Caco-2 (cell line): ENCODE measurements at regions of chr2 and their contacts with region 1.

Region 1: DNA sequence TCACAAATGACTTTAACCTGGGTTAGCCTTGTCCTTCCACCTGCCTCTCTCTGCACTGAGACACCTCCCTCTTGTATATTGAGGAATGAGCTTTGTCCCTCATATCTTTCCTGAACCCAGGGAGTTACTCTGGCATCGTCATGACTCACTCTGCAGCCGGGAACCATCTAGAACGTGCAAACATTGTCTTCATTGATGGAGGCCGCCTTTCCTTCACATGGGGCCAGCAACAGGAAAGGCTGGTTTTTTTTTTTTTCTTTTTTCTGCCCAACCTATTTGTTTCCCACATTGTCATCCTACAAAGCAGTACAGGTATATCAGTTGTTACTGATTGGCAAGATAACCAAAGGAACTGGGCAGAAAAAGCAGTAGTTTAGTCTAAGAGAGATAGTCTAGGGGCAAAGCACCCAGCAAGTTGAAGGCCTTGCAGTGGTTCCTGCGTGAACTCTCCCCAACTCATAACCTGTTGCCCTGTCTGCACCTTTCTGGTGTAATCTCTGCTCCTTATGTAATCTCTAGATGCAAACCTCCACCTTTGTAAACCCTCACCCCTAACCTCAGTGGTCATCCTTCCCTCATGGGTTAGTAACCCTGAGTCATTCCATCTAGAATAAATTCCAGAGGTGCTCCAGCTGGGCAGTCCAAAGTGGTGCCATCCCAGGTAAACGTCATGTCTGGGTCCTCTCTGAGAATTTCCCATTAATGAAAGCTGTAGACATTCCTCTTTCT is 38.3 kb downstream of the SLC40A1 start:
- DNase-seq: peak; percentile 86 to 92
- H3K4me3 ChIP-seq: no peak overlapping the region
- H3K4me3 Mint-ChIP-seq: peak overlapping the region; percentile 27
- H3K27ac Mint-ChIP-seq: peak overlapping the region; percentile 71
- H3K4me1 ChIP-seq: peaks cover 36% of the 10 kb centered on the region
- H3K4me1 Mint-ChIP-seq: peaks cover 37% of the 10 kb centered on the region
- H3K27me3 ChIP-seq: no peaks in the 10 kb centered on the region
- H3K27me3 Mint-ChIP-seq: no peaks in the 10 kb centered on the region
- CTCF ChIP-seq: no peak

Region 2: DNA sequence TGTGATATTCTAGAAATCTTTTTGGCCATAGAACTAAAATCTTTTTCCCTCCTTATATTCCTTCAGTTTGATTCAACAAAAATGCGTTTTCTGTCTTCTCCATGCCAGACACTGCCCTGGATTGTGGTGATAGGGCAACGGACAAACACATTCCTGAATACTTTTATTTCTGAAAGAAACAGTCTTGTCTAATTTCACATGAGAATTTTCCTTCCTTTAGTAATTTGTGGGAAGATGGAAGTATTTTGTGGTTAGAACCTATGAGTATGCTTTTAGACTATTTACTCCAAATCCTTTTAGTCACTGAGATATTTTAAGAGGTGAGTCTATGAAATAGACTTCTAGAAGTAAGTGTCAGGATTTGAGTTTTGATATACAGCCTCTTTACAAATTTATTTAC is 412.3 kb before region 1 on chr2:
- CTCF ChIA-PET with region 1: no interaction called
- POLR2A ChIA-PET with region 1: no interaction called
- intact Hi-C with region 1: no loop called
- DNase-seq: no peak
- H3K4me3 ChIP-seq: no peak overlapping the region
- H3K4me3 Mint-ChIP-seq: no peak overlapping the region
- H3K27ac Mint-ChIP-seq: no peak overlapping the region
- H3K4me1 ChIP-seq: no peaks in the 10 kb centered on the region
- H3K4me1 Mint-ChIP-seq: no peaks in the 10 kb centered on the region
- H3K27me3 ChIP-seq: no peaks in the 10 kb centered on the region
- H3K27me3 Mint-ChIP-seq: no peaks in the 10 kb centered on the region
- CTCF ChIP-seq: no peak

Region 3: DNA sequence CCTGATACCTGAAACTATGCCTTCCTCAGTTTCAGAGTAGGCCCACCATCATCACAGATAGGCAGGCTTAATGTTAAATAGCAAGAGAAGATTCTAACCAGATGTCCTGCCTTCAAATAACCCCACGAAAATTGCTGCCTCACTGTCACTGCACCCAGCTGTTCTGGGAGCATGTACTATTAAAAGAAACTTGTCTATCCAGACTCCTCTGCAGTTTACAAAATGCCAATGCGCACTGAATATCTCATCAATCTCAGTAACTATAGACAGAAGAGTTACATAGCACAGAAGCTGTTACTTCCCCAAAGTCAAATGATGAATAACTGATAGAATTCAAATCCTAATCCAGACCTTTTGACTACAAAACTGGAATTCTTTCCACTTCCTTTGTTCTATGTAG is 57.2 kb before region 1 on chr2:
- CTCF ChIA-PET with region 1: no interaction called
- POLR2A ChIA-PET with region 1: no interaction called
- intact Hi-C with region 1: no loop called
- DNase-seq: no peak
- H3K4me3 ChIP-seq: no peak overlapping the region
- H3K4me3 Mint-ChIP-seq: no peak overlapping the region
- H3K27ac Mint-ChIP-seq: no peak overlapping the region
- H3K4me1 ChIP-seq: peaks cover 20% of the 10 kb centered on the region
- H3K4me1 Mint-ChIP-seq: peaks cover 8% of the 10 kb centered on the region
- H3K27me3 ChIP-seq: no peaks in the 10 kb centered on the region
- H3K27me3 Mint-ChIP-seq: no peaks in the 10 kb centered on the region
- CTCF ChIP-seq: no peak

Region 4: GRCh38 chr2:189498205-189498604 is 44.1 kb before region 1 on chr2:
- CTCF ChIA-PET with region 1: no interaction called
- POLR2A ChIA-PET with region 1: no interaction called
- intact Hi-C with region 1: loop called (anchors 1 kb)
- DNase-seq: peak in 1 of 2 experiments; percentile 18
- H3K4me3 ChIP-seq: no peak overlapping the region
- H3K4me3 Mint-ChIP-seq: no peak overlapping the region
- H3K27ac Mint-ChIP-seq: no peak overlapping the region
- H3K4me1 ChIP-seq: 0 out of 2 replicates have a peak, but pooled peaks cover 5% of the 10 kb centered on the region
- H3K4me1 Mint-ChIP-seq: no peaks in the 10 kb centered on the region
- H3K27me3 ChIP-seq: no peaks in the 10 kb centered on the region
- H3K27me3 Mint-ChIP-seq: no peaks in the 10 kb centered on the region
- CTCF ChIP-seq: peak in 1 of 2 experiments; percentile 29

Region 5: GRCh38 chr2:189506514-189506976 is 35.8 kb before region 1 on chr2:
- CTCF ChIA-PET with region 1: no interaction called
- POLR2A ChIA-PET with region 1: no interaction called
- intact Hi-C with region 1: loop called (anchors 1 kb)
- DNase-seq: peak; percentile 66 to 69
- H3K4me3 ChIP-seq: no peak overlapping the region
- H3K4me3 Mint-ChIP-seq: peak overlapping the region; percentile 32
- H3K27ac Mint-ChIP-seq: peak overlapping the region; percentile 93
- H3K4me1 ChIP-seq: peaks cover 33% of the 10 kb centered on the region
- H3K4me1 Mint-ChIP-seq: peaks cover 25% of the 10 kb centered on the region
- H3K27me3 ChIP-seq: no peaks in the 10 kb centered on the region
- H3K27me3 Mint-ChIP-seq: no peaks in the 10 kb centered on the region
- CTCF ChIP-seq: no peak

Region 6: DNA sequence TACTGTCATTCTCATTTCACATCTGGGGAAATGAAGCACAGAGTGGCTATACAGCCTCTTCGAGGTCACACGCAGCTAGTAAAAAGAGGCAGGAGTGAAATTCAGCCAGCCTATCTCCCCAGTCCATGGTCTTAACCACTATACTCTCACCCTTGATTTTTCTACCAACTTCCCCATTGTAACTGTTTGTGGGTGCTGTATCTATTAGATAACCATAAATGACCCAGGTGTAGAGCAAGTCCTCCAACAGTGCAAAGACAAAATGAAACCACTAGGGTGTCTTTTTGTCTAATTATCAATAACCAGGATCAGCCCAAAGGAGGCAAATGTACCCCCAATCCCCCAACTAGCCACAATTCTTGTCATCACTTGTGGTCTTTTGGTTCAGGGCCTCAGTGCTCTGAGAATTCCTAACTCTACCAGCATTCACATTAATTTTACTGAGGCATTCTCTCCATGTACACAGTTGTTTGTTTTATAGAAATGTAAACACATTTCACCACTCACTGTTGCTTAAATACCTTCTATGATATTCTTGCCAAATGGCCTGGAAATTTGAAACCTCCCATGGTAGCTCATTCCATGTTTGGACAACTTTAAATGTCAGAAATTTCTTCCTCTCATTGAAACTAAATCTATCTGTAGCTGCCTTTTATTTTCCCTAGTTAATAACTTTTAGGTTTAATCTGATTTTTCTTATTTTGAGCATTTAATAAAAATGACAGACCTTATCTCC is 20.5 kb before region 1 on chr2:
- CTCF ChIA-PET with region 1: no interaction called
- POLR2A ChIA-PET with region 1: no interaction called
- intact Hi-C with region 1: loop called (anchors 1 kb)
- DNase-seq: no peak
- H3K4me3 ChIP-seq: no peak overlapping the region
- H3K4me3 Mint-ChIP-seq: no peak overlapping the region
- H3K27ac Mint-ChIP-seq: peak overlapping the region; percentile 23
- H3K4me1 ChIP-seq: peaks cover 20% of the 10 kb centered on the region
- H3K4me1 Mint-ChIP-seq: peaks cover 20% of the 10 kb centered on the region
- H3K27me3 ChIP-seq: no peaks in the 10 kb centered on the region
- H3K27me3 Mint-ChIP-seq: no peaks in the 10 kb centered on the region
- CTCF ChIP-seq: no peak

Region 7: DNA sequence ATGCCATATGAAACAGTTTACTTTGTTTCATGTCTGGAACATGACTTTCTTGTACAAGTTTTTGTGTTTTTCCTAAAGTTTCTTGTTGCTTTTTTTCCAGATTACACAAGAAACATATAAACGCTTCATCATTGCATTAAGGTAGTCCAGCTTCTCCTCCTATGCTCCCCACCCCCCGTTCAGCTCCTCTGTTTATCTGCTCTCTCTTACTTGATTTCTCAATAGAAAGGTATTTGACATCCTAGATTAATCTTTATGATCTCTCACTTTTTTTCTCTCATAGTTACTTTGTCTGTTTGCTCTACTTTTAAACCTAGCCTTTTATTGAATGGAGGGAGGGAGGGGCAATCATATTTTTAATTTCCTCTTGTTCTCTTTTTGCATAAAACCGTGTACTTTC is 12.9 kb after region 1 on chr2:
- CTCF ChIA-PET with region 1: no interaction called
- POLR2A ChIA-PET with region 1: interaction called, 5 read pairs
- intact Hi-C with region 1: loop called (anchors 1 kb)
- DNase-seq: peak; percentile 77 to 90
- H3K4me3 ChIP-seq: no peak overlapping the region
- H3K4me3 Mint-ChIP-seq: peak overlapping the region; percentile 52
- H3K27ac Mint-ChIP-seq: peak overlapping the region; percentile 70
- H3K4me1 ChIP-seq: peaks cover 85% of the 10 kb centered on the region
- H3K4me1 Mint-ChIP-seq: peaks cover 43% of the 10 kb centered on the region
- H3K27me3 ChIP-seq: no peaks in the 10 kb centered on the region
- H3K27me3 Mint-ChIP-seq: no peaks in the 10 kb centered on the region
- CTCF ChIP-seq: no peak

Region 8: GRCh38 chr2:189633392-189633811 is 91.1 kb after region 1 on chr2:
- CTCF ChIA-PET with region 1: no interaction called
- POLR2A ChIA-PET with region 1: no interaction called
- intact Hi-C with region 1: no loop called
- DNase-seq: peak in 1 of 2 experiments; percentile 33
- H3K4me3 ChIP-seq: no peak overlapping the region
- H3K4me3 Mint-ChIP-seq: no peak overlapping the region
- H3K27ac Mint-ChIP-seq: no peak overlapping the region
- H3K4me1 ChIP-seq: peaks cover 19% of the 10 kb centered on the region
- H3K4me1 Mint-ChIP-seq: peaks cover 12% of the 10 kb centered on the region
- H3K27me3 ChIP-seq: no peaks in the 10 kb centered on the region
- H3K27me3 Mint-ChIP-seq: no peaks in the 10 kb centered on the region
- CTCF ChIP-seq: peak; percentile 45 to 54